Lower lobe of right lung (tissue), 2 donors: ENCODE measurements at regions of chr22 and their contacts with region 1.

Region 1: GRCh38 chr22:40436505-40437451 is 66.4 kb downstream of the SGSM3 start:
- DNase-seq: no peak
- ATAC-seq: peak; percentile 65 to 71
- H3K4me3 ChIP-seq: peak overlapping the region; percentile 33
- H3K27ac ChIP-seq: peak overlapping the region; percentile 50
- H3K4me1 ChIP-seq: peaks cover 62% of the 10 kb centered on the region
- H3K27me3 ChIP-seq: no peaks in the 10 kb centered on the region
- CTCF ChIP-seq: peak; percentile 69

Region 2: GRCh38 chr22:40641269-40641668 is 204.5 kb after region 1 on chr22:
- intact Hi-C with region 1: loop called (anchors 10 kb)
- DNase-seq: no peak
- ATAC-seq: no peak
- H3K4me3 ChIP-seq: no peak overlapping the region
- H3K27ac ChIP-seq: no peak overlapping the region
- H3K4me1 ChIP-seq: peaks cover 13% of the 10 kb centered on the region
- H3K27me3 ChIP-seq: no peaks in the 10 kb centered on the region
- CTCF ChIP-seq: no peak

Region 3: GRCh38 chr22:40666151-40666848 is 229.5 kb after region 1 on chr22:
- intact Hi-C with region 1: no loop called
- DNase-seq: no peak
- ATAC-seq: peak; percentile 41 to 46
- H3K4me3 ChIP-seq: no peak overlapping the region
- H3K27ac ChIP-seq: no peak overlapping the region
- H3K4me1 ChIP-seq: peaks cover 10% of the 10 kb centered on the region
- H3K27me3 ChIP-seq: no peaks in the 10 kb centered on the region
- CTCF ChIP-seq: no peak